ENCODE measurements at regions of chr4 and their contacts with region 1.

Region 1: DNA sequence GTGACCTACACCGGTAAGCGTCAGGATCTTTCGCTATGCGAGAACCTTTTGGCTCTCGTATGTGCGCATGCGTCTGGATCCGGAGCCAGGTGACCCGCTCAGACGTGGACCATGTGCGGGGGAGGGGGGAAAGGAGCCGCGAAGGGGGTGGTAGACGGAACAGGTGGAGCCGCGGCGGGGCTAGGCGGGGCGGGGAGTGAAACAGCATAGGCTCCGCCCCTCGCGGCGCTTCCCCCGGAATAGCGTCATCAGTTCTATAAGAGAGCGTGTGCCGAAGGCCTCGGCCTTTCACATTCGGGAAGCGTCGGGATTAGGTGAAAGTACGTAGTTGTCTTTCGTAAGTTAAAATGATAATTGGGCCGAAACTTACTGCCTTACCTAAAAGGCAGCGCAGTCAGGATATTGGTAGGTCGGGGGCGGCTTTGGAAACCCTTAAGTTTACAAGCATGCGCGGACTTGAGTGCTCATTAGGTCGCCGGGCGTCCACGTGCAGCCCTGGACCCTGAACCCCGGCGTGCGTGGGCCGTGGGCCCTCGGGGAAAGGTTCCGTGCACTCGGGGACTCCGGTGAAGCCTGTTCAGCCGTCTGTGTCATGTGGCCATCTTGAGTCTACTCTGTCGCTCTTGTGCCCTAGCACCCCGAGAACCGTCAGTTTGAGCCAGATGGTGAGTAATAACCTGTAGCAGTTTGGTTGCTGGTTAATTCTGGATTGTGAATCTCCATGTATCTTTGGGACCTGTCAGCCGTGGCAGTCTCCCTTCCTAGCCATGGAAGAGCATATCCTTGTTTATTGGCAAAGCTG is 74.1 kb downstream of the PRSS12 start:
- DNase-seq: peak; percentile 93
- H3K4me3 Mint-ChIP-seq: peak overlapping the region; percentile 85
- H3K27ac Mint-ChIP-seq: peak overlapping the region; percentile 98
- H3K4me1 Mint-ChIP-seq: peaks cover 29% of the 10 kb centered on the region
- H3K27me3 Mint-ChIP-seq: peaks cover 2% of the 10 kb centered on the region

Region 2: DNA sequence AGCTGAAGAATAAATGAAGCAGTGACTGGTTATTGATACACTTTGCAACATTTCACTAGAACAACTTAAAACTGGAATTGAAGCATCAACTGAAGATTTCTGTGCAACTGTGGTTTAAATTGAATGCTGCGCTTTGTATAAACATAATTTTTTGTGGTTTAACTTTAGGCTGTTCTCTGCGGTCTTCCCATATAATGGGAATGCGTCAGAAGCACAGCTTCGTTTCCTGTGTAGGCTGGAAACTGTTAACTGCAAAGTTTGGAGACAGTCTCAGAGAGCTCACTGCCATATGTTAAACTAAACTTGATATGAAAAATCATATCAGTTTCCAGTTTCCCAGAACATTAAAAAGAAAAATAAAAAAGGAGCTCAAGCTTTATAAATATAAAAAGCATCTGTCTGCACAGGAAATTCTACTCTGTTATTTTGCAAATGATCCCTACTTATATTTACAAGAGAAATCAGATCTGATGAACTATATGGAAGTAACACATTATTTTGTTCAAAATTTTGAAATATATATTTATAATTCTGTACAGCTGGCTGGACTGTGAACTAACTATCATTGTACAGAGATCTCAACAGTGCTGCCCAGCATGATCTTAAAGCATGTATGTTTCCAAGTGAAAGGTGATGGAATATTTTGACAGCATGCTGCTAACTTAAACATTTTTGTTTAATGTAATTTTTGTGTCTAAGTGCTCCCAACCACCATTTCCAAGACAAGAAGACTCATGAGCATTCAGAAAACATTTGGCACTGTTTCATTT is 104.5 kb before region 1 on chr4:
- intact Hi-C with region 1: loop called (anchors 2 kb)
- DNase-seq: no peak
- H3K4me3 Mint-ChIP-seq: no peak overlapping the region
- H3K27ac Mint-ChIP-seq: peak overlapping the region; percentile 77
- H3K4me1 Mint-ChIP-seq: peaks cover 48% of the 10 kb centered on the region
- H3K27me3 Mint-ChIP-seq: peaks cover 5% of the 10 kb centered on the region

Region 3: DNA sequence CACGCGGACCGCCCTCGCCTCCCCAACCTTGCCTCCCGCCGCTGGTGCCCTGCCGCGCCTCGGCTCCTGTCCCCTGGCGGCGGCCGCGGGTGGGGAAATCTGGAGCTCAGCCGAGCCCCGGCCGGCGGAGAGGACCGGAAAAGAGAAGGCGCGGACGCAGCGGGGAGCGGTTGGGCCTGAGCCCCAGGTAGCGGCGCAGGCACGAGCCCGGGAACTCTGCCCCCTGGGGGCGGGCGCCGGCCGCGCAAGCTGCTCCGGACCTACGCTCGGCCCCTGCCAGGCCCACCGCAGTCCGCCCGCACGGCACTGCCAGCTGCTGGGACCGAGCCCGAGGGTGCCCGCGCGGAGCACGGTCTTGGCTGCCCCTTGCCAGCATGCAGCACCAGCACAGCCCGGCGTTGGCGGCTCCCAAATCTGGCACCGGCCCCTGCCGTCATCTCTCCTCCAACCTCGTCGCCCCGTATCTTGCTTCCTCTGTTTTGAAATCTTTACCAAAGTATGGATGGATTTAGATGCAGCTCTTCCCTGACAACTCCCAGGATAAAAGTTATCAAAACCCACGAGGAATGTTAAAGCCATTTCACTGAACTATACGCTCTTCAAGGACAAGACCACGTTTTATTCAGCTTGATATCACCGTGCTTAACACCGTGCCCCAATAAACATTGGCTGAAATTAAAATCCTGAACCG is 74.3 kb after region 1 on chr4 and contains the start of gene PRSS12:
- intact Hi-C with region 1: loop called (anchors 2 kb)
- DNase-seq: peak; percentile 56
- H3K4me3 Mint-ChIP-seq: peak within 1 kb of the TSS; percentile 76
- H3K27ac Mint-ChIP-seq: no peak within 1 kb of the TSS
- H3K4me1 Mint-ChIP-seq: peaks cover 11% of the 10 kb centered on the region
- H3K27me3 Mint-ChIP-seq: peaks cover 68% of the 10 kb centered on the region
- total RNA-seq, gene PRSS12: not detected in 2 replicates

Region 4: DNA sequence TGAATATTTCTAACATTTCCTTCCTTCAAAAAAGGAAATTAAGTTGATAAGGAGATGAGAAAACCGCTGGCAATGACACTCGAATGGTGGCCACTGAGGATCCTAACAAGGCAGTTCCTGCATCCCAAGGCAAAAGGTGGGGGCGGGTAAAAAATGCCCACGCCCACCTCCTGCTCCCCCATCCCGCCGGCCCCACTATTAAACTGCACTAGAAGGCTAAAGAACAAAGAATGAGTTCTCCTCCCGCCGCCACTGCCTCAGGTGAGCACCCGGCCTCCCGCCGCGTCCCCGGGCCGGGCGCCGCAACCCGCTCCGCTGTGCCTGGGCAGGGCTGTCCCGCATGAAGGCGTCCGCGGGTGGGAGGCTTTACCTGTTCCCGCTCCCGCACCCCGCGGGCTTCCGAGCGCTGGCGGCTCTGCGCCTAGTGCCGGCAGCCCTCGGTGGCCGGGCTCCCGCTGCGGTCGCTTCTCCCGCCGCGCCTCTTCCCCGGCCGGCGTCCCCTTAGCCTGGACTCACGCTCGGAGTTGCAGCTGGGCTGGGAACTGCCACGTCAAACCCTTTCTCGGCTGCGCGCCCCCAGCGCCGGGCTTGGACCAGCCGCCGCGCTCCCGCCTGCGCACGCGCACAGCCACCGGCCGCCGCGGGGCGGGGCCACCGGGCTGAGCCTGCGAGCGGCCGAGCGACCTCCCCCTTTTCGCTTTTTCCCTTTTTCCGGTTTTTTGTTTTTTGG is 557.1 kb after region 1 on chr4 and contains the start of gene SEC24D:
- intact Hi-C with region 1: loop called (anchors 5 kb)
- DNase-seq: peak; percentile 83
- H3K4me3 Mint-ChIP-seq: peak within 1 kb of the TSS; percentile 100
- H3K27ac Mint-ChIP-seq: peak within 1 kb of the TSS; percentile 99
- H3K4me1 Mint-ChIP-seq: peaks cover 27% of the 10 kb centered on the region
- H3K27me3 Mint-ChIP-seq: peaks cover 8% of the 10 kb centered on the region
- total RNA-seq, gene SEC24D: 54.8 and 60.0 TPM in 2 replicates

Measured in activated T-helper 2 cell treated with anti-CD3 and anti-CD28 coated beads, Interferon-gamma antibody, Interleukin-2, Interleukin-4, amounts not matched to agents 10 μg/mL and 5 μg/mL and 100 μg/mL, durations not matched to agents 14 hours and 24 hours and 36 hours (primary cell).